ENCODE measurements at regions of chr12 and their contacts with region 1.

Region 1: GRCh38 chr12:38847247-38847646 is 58.1 kb downstream of the CPNE8 start:
- DNase-seq: no peak
- ATAC-seq: no peak
- H3K4me3 ChIP-seq: no peak overlapping the region
- H3K27ac ChIP-seq: no peak overlapping the region
- H3K4me1 ChIP-seq: no peaks in the 10 kb centered on the region
- H3K27me3 ChIP-seq: no peaks in the 10 kb centered on the region
- CTCF ChIP-seq: no peak
- POLR2A ChIP-seq: no peak
- RAD21 ChIP-seq: no peak

Region 2: GRCh38 chr12:38149395-38150286 is 697.6 kb before region 1 on chr12:
- CTCF ChIA-PET with region 1: no interaction called
- POLR2A ChIA-PET with region 1: no interaction called
- RAD21 ChIA-PET with region 1: no interaction called
- intact Hi-C with region 1: no loop called
- DNase-seq: peak; percentile 46
- ATAC-seq: peak; percentile 94
- H3K4me3 ChIP-seq: peak overlapping the region in 1 of 2 experiments; percentile 26; a peak in 1 of 4 replicates
- H3K27ac ChIP-seq: no peak overlapping the region
- H3K4me1 ChIP-seq: peaks cover 6 to 24% of the 10 kb centered on the region in 2 experiments; a peak in 3 of 4 replicates
- H3K27me3 ChIP-seq: no peaks in the 10 kb centered on the region
- CTCF ChIP-seq: no peak
- POLR2A ChIP-seq: no peak
- RAD21 ChIP-seq: no peak; the same call in 1 of the 2 replicates

Region 3: DNA sequence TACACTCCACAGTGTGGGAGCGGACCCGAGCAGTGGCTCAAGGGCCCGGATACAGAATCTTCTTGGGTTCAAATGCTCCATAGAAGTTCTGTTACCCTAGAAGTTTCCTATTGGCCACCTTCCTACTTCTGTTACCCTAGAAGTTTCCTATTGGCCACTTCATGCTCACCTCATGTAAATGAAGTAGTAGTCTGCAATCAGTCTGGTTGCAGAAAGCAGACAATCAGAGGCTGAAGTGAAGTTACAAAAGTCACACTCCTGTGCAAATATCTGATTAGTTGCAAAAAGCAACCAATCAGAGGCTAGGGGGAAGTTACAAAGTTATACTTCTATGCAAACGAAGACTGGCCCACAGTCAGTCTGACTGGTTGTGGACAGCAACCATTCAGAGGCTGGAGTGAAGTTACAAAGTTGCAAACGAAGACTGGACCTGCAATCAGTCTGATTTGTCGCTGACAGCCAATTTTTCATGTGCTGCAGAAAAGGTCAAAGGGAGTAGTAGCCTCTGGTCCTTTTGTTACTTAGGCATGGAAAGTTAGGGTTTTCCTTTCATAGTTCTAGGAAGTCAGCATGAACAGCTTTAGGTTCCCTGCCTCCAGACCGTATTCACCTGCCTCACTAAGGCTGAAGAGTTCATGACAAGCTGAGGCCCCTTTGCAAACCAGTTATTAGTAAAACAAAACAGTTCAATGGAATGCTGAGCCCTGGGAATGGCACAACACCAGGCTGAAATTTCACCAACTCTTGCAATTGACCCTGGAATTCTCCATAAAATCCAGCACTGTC is 136.1 kb after region 1 on chr12:
- CTCF ChIA-PET with region 1: no interaction called
- POLR2A ChIA-PET with region 1: no interaction called
- RAD21 ChIA-PET with region 1: no interaction called
- intact Hi-C with region 1: loop called (anchors 5 kb)
- DNase-seq: no peak
- ATAC-seq: no peak
- H3K4me3 ChIP-seq: no peak overlapping the region
- H3K27ac ChIP-seq: no peak overlapping the region
- H3K4me1 ChIP-seq: no peaks in the 10 kb centered on the region
- H3K27me3 ChIP-seq: no peaks in the 10 kb centered on the region
- CTCF ChIP-seq: no peak
- POLR2A ChIP-seq: no peak
- RAD21 ChIP-seq: no peak

Region 4: DNA sequence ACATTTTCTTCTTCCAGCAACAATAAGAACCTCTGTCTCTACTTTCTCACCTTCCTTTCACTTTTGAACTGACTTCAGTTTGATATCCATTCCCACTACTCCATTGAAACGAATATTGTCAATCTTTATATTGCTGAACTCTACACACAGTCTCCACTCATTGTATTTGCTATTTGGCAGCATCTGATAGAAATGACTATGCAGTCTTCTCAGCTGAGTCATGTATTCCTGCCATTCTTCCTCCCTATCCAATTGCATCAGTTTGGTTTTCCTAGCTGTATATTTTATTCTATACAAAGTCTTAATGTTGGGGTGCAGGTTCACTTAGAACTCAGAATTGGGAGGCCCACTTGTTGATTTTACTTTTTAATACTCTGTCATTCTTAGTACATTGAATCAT is 165.6 kb after region 1 on chr12:
- CTCF ChIA-PET with region 1: no interaction called
- POLR2A ChIA-PET with region 1: no interaction called
- RAD21 ChIA-PET with region 1: no interaction called
- intact Hi-C with region 1: no loop called
- DNase-seq: no peak
- ATAC-seq: no peak
- H3K4me3 ChIP-seq: no peak overlapping the region
- H3K27ac ChIP-seq: no peak overlapping the region
- H3K4me1 ChIP-seq: no peaks in the 10 kb centered on the region
- H3K27me3 ChIP-seq: no peaks in the 10 kb centered on the region
- CTCF ChIP-seq: no peak
- POLR2A ChIP-seq: no peak
- RAD21 ChIP-seq: no peak

Region 5: GRCh38 chr12:39122562-39123204 is 275.4 kb after region 1 on chr12:
- CTCF ChIA-PET with region 1: no interaction called
- POLR2A ChIA-PET with region 1: no interaction called
- RAD21 ChIA-PET with region 1: no interaction called
- intact Hi-C with region 1: no loop called
- DNase-seq: peak; percentile 28
- ATAC-seq: peak; percentile 87
- H3K4me3 ChIP-seq: no peak overlapping the region
- H3K27ac ChIP-seq: no peak overlapping the region
- H3K4me1 ChIP-seq: peaks cover 0 to 20% of the 10 kb centered on the region in 2 experiments; a peak in 2 of 4 replicates
- H3K27me3 ChIP-seq: no peaks in the 10 kb centered on the region
- CTCF ChIP-seq: peak in 2 of 3 experiments; percentile 20 to 23; a peak in 2 of 6 replicates
- POLR2A ChIP-seq: no peak
- RAD21 ChIP-seq: peak; percentile 53

Region 6: GRCh38 chr12:39426636-39427245 is 579.5 kb after region 1 on chr12:
- CTCF ChIA-PET with region 1: no interaction called
- POLR2A ChIA-PET with region 1: no interaction called
- RAD21 ChIA-PET with region 1: no interaction called
- intact Hi-C with region 1: no loop called
- DNase-seq: no peak
- ATAC-seq: no peak
- H3K4me3 ChIP-seq: no peak overlapping the region
- H3K27ac ChIP-seq: no peak overlapping the region
- H3K4me1 ChIP-seq: no peaks in the 10 kb centered on the region
- H3K27me3 ChIP-seq: no peaks in the 10 kb centered on the region
- CTCF ChIP-seq: no peak
- POLR2A ChIP-seq: no peak
- RAD21 ChIP-seq: no peak

Measured in HCT116 (cell line).